ENCODE measurements at regions of chr3 and their contacts with region 1.

Region 1: GRCh38 chr3:188154014-188154808 is at the start of gene LPP:
- DNase-seq: peak; percentile 97
- H3K4me3 Mint-ChIP-seq: peak within 1 kb of the TSS; percentile 86
- H3K27ac Mint-ChIP-seq: peak within 1 kb of the TSS; percentile 90
- H3K4me1 Mint-ChIP-seq: peaks cover 58% of the 10 kb centered on the region
- H3K27me3 Mint-ChIP-seq: no peaks in the 10 kb centered on the region
- total RNA-seq, gene LPP: 39.5 and 41.4 TPM in 2 replicates

Region 2: GRCh38 chr3:187745201-187746058 is 408.8 kb before region 1 on chr3 and contains the start of gene BCL6:
- intact Hi-C with region 1: loop called (anchors 1 kb)
- DNase-seq: peak; percentile 97
- H3K4me3 Mint-ChIP-seq: peak within 1 kb of the TSS; percentile 98
- H3K27ac Mint-ChIP-seq: peak within 1 kb of the TSS; percentile 99
- H3K4me1 Mint-ChIP-seq: peaks cover 61% of the 10 kb centered on the region
- H3K27me3 Mint-ChIP-seq: no peaks in the 10 kb centered on the region
- total RNA-seq, gene BCL6: 41.7 and 51.7 TPM in 2 replicates

Region 3: DNA sequence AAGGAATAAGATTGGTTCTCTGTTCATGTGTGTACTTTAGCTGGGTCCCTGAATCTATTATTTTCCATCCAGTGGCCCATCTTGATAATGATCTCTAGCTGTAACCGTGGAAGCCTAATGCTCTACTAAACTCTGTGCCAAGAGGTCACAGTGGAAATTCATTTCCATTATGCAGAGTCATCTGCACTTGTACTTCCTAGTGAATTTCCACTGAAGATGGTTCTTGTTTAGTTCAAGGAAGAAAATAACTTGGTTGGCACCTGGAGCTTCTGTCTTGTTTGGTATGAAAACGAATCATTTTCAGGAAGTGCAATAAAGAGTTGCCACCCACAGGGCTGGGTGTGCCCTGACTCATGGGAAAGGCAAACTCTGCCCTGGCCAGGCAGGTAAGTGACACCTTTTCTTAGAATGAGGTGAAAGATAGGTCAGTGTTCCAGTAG is 10.1 kb after region 1 on chr3:
- intact Hi-C with region 1: loop called (anchors 1 kb)
- DNase-seq: no peak
- H3K4me3 Mint-ChIP-seq: peak overlapping the region; percentile 22
- H3K27ac Mint-ChIP-seq: peak overlapping the region; percentile 82
- H3K4me1 Mint-ChIP-seq: peaks cover 39% of the 10 kb centered on the region
- H3K27me3 Mint-ChIP-seq: no peaks in the 10 kb centered on the region

Region 4: DNA sequence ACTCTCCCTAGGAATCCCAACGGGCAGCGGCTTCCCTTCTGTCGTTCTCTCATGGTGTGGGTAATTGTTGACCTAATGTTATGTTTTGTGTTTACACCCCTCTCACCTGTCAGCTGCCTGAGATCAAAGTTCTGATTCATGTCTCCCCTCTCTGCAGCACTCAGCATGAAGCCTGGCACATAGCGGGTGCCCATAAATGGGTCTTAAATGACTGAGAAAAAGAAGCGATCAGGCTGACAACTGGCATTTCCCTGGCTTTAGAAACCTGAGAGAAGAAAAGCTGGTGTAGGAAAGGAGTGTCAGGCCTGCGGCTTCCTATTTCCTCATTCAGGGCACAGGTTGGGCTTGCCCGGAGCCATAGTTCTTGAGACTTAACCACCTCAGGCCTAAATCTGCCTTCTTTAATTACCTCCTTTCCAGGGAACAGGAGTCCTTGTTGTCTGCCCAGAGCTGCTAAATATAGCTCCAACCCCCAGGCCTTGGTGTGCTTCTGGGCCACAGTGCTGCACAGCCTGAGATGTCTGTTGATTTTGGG is 31.6 kb after region 1 on chr3:
- intact Hi-C with region 1: loop called (anchors 5 kb)
- DNase-seq: no peak
- H3K4me3 Mint-ChIP-seq: no peak overlapping the region
- H3K27ac Mint-ChIP-seq: no peak overlapping the region
- H3K4me1 Mint-ChIP-seq: peaks cover 30% of the 10 kb centered on the region
- H3K27me3 Mint-ChIP-seq: no peaks in the 10 kb centered on the region

Region 5: GRCh38 chr3:188286087-188286513 is 131.9 kb after region 1 on chr3:
- intact Hi-C with region 1: loop called (anchors 5 kb)
- DNase-seq: no peak
- H3K4me3 Mint-ChIP-seq: peak overlapping the region; percentile 4
- H3K27ac Mint-ChIP-seq: peak overlapping the region; percentile 80
- H3K4me1 Mint-ChIP-seq: peaks cover 48% of the 10 kb centered on the region
- H3K27me3 Mint-ChIP-seq: no peaks in the 10 kb centered on the region

Region 6: DNA sequence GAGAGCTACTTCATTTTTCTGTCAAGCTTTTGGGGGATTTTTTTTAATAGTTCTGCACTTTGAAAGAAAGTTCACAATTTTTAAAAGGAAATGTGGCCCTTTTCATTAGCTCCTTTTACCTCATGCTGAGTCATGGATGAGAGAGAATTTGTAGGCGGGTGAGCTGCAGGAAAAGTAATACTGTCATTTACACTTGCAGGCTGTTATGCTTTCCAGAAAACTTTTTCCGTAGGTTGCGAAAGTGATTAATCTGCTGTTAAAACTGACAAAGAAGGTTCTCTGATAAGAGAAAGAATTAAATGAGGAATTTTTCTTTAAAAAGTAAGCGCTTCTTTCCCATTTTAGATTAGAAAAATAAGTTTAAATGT is 429.9 kb after region 1 on chr3:
- intact Hi-C with region 1: loop called (anchors 10 kb)
- DNase-seq: no peak
- H3K4me3 Mint-ChIP-seq: no peak overlapping the region
- H3K27ac Mint-ChIP-seq: no peak overlapping the region
- H3K4me1 Mint-ChIP-seq: peaks cover 14% of the 10 kb centered on the region
- H3K27me3 Mint-ChIP-seq: no peaks in the 10 kb centered on the region

Region 7: DNA sequence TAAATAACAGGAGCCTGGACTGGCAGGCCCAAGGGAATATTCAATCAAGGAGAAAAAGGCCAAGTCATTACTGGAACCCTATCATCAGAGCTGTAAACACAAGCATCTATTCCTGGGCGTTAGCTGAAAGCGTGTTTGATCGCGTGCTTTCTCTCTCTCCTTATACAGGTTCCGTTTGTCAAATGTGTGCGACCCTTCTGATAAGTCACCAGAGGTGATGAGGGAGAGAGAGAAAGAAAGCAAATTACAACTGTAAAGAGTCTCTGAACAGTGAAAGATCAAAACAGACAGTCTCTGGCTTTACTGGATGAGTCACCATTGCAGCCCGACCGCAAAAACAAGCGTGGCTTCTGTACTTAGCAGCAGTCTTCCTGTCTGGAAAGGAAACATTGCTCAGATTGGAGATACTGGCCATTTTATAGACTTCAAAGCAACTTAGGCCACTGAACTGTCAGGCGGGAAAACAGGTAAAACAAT is 978.1 kb after region 1 on chr3:
- intact Hi-C with region 1: loop called (anchors 10 kb)
- DNase-seq: peak; percentile 93
- H3K4me3 Mint-ChIP-seq: peak overlapping the region; percentile 70
- H3K27ac Mint-ChIP-seq: peak overlapping the region; percentile 91
- H3K4me1 Mint-ChIP-seq: peaks cover 25% of the 10 kb centered on the region
- H3K27me3 Mint-ChIP-seq: no peaks in the 10 kb centered on the region

Measured in activated CD4-positive, alpha-beta T cell treated with anti-CD3 and anti-CD28 coated beads, Interleukin-2, amount 10 ng/mL, durations not matched to agents 24 days and 14 days (primary cell).